Tibial artery (tissue), 4 donors: ENCODE measurements at regions of chr1 and their contacts with region 1.

Region 1: GRCh38 chr1:171160211-171160610 is 24.9 kb upstream of the FMO2 start:
- DNase-seq: no peak
- H3K4me3 ChIP-seq: no peak overlapping the region
- H3K27ac ChIP-seq: peak overlapping the region; percentile 40 to 56
- H3K4me1 ChIP-seq: peaks cover 0 to 12% (median 11%) of the 10 kb centered on the region in 4 donors
- H3K27me3 ChIP-seq: no peaks in the 10 kb centered on the region
- CTCF ChIP-seq: no peak

Region 2: GRCh38 chr1:171204296-171204695 is 44.1 kb after region 1 on chr1:
- intact Hi-C with region 1: loop called (anchors 2 kb)
- DNase-seq: no peak
- H3K4me3 ChIP-seq: no peak overlapping the region
- H3K27ac ChIP-seq: no peak overlapping the region
- H3K4me1 ChIP-seq: peaks cover 0 to 6% (median 0%) of the 10 kb centered on the region in 4 donors
- H3K27me3 ChIP-seq: no peaks in the 10 kb centered on the region
- CTCF ChIP-seq: no peak

Region 3: DNA sequence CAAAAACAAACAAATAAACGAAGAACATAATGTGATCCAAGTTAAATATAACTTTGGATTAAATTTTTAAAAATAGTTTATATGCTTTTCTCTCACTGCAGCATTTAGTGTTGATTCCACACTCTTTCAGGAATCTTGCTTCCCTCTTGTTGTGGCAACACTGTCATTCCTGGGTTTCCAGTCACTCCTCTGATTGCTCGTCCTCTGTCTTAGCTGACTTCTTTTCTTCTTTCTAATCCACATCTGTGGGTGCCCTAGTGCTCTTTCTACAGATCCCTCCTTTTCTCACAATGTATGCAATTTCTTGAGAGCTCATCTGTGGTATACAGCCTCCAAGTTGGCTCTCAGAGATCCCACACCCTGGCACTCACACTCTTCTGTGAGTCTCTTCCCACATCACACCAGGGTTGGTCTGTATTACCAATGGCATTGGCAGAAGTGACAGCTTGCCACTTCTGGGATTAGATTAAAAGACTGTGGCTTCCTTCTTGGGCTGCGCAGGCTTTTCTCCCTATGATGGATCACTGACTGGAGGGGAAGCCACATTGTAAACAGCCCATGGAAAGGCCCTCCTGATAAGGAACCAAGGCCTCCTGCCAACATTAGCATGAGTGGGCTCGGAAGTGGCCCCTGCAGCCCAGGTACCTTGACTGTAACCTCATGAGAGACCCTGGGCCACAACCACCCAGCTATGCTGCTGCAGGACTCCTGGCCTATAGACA is 503.8 kb after region 1 on chr1:
- intact Hi-C with region 1: no loop called
- DNase-seq: no peak
- H3K4me3 ChIP-seq: no peak overlapping the region
- H3K27ac ChIP-seq: peak overlapping the region; percentile 31 to 53
- H3K4me1 ChIP-seq: peaks cover 0 to 19% (median 2%) of the 10 kb centered on the region in 4 donors
- H3K27me3 ChIP-seq: no peaks in the 10 kb centered on the region
- CTCF ChIP-seq: no peak